GM18951 (cell line): ENCODE measurements at regions of chr1 and their contacts with region 1.

Region 1: GRCh38 chr1:202122639-202123335 is at the start of gene GPR37L1:
- POLR2A ChIP-seq: no peak

Region 2: DNA sequence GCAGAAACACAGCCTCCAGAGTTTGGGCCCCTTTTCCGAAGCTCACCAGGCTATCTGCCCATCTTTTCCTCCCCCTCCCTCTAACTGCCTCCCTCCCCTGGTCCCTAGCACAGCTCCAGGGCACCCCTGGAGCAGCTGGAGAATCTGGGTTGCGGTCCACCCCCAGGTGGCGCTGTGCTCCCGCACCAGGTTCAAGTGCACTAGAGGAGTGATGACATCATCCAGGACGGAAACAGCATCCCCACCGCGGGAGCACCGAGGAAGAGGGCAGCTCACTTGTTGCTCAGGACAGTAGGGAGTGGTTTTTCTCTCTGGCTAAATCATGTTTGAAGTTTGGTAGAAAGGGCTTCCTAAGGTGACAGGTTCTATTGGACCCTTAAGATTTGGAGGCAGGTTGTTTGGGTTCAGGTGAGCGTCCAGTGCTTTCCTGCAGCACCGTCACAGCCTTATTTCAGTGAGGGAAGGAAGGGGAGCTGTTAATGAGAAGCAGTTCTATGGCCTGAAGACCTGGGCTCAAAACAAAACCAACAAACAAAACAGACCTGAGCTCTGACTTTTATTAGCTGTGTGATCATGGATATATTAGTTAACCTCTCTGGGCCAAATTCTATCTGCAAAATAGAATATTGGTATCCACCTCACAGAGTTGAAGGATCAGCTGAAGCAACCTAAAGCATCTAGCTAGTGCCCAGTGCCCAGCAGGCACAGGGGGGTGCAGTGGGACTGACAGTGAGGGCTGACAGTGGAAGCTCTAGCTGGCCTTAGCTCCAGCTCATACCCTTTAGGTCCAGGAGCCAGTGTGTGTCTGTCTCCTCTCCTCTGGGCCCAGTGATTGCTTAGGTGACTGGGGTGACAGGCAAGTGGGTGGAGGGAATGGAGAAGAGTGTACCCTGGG is 226.6 kb before region 1 on chr1:
- in situ Hi-C with region 1: loop called (anchors 10 kb)
- POLR2A ChIP-seq: no peak

Region 3: GRCh38 chr1:202009326-202010179 is 113.2 kb before region 1 on chr1:
- in situ Hi-C with region 1: loop called (anchors 5 kb)
- POLR2A ChIP-seq: no peak